Cardiac septum (tissue), 1 donor: ENCODE measurements at regions of chr1 and their contacts with region 1.

Region 1: DNA sequence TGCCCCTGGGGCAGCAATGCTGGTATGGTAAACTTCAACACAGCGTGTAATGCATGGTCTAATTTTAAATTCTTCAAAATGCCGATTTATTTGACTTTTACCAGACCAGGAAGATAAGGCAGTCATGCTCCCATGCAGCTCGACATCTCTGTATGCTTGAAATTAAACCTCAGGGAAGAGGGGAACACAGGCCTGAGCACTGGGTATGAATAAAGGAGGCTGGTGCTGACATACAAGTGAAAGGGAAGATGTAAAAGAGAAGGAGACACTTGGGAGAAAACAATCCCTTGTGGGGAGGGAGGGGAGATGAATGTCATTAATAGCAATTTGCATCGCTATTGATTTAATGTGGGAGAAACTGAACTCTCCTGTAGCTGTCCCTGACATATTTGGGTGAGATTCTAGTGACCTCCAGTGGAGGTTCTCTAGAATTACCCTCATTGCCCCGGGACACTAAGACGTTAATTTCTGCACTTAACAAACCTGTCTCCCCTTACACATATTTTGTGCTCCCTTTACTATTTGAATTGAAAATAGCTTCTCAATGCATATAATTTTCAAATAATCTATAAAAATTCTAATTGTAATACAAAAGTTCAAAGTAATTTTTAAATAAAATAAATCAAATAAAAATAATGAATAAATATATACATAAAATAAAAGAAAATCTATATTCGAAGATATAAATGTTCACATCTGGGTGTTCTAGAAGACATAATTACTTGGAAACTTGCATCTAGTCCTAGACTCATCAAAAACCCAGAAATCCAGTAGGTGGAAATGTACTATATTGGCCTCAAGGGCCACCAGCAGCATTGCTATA is 283.1 kb downstream of the LMX1A start:
- DNase-seq: no peak

Region 2: GRCh38 chr1:163361123-163361934 is 1712.1 kb before region 1 on chr1:
- intact Hi-C with region 1: loop called (anchors 10 kb)
- DNase-seq: no peak

Region 3: DNA sequence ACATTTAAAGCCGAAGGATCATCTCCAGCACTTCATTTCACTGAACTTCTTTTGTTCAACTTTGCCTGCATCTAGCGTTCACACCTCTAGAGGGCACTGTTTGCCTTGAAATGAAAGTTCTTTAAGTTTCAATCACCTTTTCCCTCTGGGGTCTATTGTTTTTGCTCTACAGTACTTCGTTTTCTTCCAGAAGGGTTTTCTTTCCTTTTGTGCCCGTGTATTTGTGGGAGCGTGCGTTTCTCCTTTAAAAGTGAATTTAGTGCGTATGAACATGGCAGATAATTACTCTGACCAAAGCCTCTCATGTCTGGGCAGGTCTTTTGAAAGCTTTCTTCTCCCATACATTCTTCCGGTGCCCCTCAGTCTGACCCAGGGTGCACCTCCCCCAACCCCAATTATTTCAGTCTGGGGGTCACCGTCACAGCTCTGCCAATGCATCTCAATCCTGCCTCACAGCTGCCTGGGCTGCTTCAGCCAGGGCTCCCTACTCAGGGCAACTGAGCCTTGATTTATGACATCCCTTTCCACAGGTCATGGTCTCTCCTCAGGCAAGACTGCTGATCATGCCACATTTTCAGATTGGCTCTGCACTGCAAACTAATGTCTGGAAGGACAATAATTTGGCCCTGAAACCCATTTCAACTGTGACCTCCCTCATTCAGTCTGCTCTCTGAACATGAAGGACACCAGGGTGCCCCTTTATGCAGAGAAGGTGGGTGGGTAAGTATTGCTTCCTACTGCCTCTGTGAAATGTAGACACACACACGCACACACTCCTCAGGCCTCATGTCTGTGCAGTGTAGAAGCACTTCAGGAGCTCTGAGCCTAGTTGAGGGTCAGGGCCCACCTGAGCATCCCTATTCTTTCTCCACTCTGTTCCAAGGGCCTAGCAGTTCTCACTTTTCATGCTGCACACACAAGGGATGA is 1663.1 kb before region 1 on chr1:
- intact Hi-C with region 1: loop called (anchors 5 kb)
- DNase-seq: no peak

Region 4: GRCh38 chr1:163535807-163536206 is 1537.6 kb before region 1 on chr1:
- intact Hi-C with region 1: loop called (anchors 5 kb)
- DNase-seq: no peak

Region 5: DNA sequence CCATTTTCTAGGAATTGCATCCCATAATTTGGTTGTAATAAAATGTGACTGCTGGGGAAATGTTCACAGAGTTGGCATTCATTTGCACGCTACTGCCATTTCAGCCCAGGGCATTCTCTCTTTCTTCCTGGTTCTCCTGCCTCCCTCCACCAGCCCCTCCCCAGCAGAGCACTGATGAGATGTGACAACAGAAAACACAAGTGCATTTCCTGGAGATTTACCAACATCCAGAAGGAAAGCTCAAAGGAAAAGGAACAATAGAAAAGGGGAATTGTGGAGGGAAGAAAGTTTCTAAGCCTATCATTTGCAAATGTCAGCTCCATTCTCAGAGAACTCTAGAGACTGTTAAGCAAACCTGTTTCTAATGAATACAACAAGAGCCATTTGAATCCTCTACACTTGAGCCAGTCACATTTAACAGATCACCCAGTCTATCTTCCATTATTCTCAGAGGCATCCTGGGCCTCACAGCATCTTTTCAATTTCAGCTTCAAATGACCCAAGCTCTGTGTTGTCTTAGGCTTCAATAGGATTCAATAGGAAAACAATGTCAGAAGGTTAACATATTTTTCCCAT is 910.0 kb before region 1 on chr1:
- intact Hi-C with region 1: loop called (anchors 10 kb)
- DNase-seq: no peak

Region 6: DNA sequence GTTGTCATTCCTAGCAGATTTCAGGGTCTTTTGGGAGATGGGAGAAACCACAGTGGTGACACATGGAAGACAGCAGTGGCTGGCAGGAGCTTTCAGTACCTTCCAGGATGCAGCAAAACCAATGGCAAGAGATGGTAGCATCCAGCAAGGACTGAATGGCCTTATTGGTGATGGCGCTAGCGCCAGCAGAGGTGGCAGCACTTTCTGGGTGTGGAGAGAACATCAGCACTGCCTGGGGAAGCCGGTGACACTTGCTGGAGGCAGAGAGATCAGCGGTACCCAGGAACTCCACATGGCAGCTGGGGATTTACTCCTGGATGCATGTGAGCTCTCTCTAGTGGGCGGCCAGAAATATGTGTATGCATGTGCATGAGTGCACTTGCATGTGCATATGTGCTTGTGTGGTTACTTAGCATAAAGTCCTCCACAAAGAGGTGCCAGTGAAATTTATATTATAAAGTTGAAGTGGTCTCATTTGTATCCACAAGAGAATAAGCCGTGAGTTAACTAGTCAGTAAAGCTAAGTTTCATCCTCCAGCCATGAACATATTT is 81.6 kb before region 1 on chr1:
- intact Hi-C with region 1: no loop called
- DNase-seq: no peak

Region 7: GRCh38 chr1:165114022-165114888 is 40.9 kb after region 1 on chr1:
- intact Hi-C with region 1: no loop called
- DNase-seq: no peak